Adrenal gland (tissue), 19 donors: ENCODE measurements at regions of chr6 and their contacts with region 1.

Region 1: DNA sequence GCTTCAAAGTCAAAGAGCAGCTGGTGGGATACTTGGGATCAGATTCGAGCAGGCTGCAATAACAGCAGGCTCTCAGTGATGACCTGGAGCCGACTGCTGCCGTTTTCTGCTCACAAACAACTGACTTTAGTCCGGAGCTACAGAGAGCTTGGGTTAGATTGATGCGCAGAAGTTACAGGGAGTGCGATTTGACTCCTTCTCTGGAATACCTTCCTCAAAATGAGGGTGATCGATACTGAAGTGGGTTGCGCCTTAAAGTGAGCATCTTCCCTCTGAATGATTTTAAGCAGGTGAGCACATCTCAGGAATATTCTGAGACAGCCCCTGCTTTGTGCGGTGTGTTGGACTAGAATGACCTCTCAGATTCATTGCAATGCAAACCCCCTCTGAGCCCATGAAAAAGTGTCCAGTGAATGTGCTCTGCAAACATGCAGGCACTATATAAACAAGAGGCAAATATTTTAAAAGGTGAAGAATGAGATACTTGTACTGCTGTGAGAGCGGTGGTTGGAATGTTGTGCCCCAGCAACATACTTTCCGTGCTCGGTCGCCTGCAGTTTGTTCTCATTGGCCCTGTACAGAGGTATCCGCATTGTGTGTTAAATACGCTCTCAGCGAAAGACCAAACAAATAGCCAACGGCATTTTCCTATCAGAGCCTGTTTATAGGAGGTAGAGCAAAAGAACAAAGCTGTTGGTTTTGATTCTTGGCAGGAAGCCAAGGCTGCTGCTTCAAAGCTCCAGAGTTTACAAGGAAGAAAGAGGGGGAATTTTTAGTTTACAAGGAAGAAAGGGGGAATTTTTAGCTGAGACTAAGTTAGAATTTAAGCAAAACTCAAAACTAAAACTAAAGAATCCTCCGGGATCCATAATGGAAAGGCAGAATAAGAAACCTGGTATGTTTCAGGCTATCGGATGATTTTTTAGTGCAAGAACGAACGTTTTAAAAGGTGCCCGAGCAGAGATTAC is 67.7 kb downstream of the PHACTR2 start:
- DNase-seq: peak; percentile 53 to 69 (median 62)
- H3K4me3 ChIP-seq: peak overlapping the region in 1 of 4 donors; percentile 18
- H3K27ac ChIP-seq: peak overlapping the region; percentile 49 to 88 (median 73)
- H3K4me1 ChIP-seq: peaks cover 61 to 70% of the 10 kb centered on the region in 2 donors
- H3K27me3 ChIP-seq: no peaks in the 10 kb centered on the region
- CTCF ChIP-seq: no peak
- POLR2A ChIP-seq: peak in 1 of 2 donors; percentile 44

Region 2: DNA sequence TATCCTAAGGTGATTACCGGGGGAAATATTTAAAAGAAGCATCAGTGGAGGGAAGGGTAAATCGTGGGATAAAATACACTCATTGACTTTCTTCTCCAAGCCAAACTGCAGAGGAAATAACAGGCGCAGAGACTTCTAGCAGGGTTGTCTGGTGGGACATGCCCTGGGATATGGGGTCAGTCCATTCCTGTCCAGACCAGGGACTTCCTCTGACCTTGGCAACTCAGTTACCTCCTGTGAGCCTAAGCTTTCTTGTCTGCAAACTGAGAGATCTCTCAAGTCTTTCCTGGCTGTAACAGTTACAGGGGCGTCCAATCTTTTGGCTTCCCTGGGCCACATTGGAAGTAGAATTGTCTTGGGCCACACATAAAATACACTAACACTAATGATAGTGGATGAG is 89.4 kb before region 1 on chr6:
- intact Hi-C with region 1: no loop called
- DNase-seq: no peak
- H3K4me3 ChIP-seq: no peak overlapping the region
- H3K27ac ChIP-seq: no peak overlapping the region
- H3K4me1 ChIP-seq: no peaks in the 10 kb centered on the region
- H3K27me3 ChIP-seq: no peaks in the 10 kb centered on the region
- CTCF ChIP-seq: no peak
- POLR2A ChIP-seq: no peak

Region 3: DNA sequence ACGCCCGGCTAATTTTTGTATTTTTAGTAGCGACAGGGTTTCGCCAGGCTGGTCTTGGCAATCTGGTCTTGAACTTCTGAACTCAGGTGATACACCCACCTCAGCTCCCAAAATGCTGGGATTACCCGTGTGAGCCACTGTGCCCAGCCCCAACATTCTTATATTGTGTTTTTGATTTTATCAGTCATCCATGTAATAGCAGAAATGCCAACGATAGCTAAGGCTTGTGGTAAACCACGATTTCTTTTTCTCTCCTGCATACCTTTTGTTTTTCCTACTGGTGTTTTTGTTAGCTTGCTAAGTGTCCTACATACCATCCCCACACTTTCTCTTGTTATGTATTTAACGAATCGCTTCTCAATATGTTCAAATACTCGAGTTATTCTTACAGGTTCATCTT is 55.6 kb before region 1 on chr6:
- intact Hi-C with region 1: loop called in 1 of 2 experiments (anchors 10 kb)
- DNase-seq: no peak
- H3K4me3 ChIP-seq: no peak overlapping the region
- H3K27ac ChIP-seq: no peak overlapping the region
- H3K4me1 ChIP-seq: peaks cover 53 to 72% of the 10 kb centered on the region in 2 donors
- H3K27me3 ChIP-seq: no peaks in the 10 kb centered on the region
- CTCF ChIP-seq: no peak
- POLR2A ChIP-seq: no peak

Region 4: DNA sequence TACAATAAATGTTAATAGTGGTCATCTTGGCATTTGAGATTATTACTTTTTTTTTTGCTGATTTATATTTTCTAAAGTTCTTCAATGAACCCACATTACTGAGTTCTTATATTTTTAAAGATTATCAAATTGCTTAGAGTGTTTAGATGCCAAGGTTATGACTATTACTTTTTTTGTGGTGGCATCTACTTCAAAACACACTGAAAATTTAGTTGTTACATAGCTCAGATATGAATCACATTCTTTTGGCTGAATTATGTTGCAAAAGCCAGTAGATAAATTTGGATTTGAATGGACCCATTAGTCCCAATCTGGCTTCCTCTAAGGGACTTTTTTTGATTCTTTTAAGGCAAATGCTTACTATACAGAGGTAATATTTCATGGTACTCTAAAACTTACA is 548.6 kb after region 1 on chr6:
- intact Hi-C with region 1: no loop called
- DNase-seq: no peak
- H3K4me3 ChIP-seq: no peak overlapping the region
- H3K27ac ChIP-seq: no peak overlapping the region
- H3K4me1 ChIP-seq: peaks cover 26 to 32% of the 10 kb centered on the region in 2 donors
- H3K27me3 ChIP-seq: no peaks in the 10 kb centered on the region
- CTCF ChIP-seq: no peak
- POLR2A ChIP-seq: no peak